Right ventricle myocardium superior (tissue), 1 donor: ENCODE measurements at regions of chr3 and their contacts with region 1.

Region 1: DNA sequence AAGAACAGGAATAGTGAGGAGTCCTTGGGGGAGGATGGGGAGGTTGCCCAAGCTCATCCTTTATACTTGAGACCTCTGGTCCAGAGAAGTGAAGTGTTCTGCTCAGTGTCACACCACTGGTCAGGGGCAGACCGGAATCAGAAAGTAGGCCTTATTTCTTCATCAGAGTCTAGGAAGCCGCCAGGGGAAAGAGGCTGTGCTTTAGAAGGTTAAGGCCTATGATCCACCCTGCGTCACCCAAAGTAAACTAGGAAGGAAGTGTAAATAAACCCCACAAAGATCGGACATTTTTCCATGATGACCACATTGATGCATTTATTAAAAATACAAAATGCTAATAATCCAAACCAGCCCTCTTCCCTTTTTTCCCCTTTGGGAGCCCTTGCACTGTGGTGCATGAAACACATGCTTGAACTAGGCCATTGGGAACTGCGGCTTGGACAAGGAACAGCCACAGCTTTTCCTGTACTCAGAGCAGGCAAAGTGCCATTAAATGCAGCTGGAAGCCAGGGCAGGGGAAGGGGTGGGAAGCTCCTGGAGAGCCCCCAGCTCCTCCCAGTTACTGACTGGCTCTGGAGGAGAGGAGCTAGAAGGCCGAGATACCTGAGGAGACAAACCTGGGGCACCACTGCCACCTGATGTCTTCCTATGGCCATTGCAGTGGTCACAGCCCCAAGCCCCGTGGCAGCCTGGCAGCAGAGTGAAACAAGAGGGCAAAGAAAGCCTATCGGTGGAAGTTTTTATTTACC is 37.0 kb downstream of the CDC25A start:
- DNase-seq: peak; percentile 86
- ATAC-seq: peak; percentile 99

Region 2: DNA sequence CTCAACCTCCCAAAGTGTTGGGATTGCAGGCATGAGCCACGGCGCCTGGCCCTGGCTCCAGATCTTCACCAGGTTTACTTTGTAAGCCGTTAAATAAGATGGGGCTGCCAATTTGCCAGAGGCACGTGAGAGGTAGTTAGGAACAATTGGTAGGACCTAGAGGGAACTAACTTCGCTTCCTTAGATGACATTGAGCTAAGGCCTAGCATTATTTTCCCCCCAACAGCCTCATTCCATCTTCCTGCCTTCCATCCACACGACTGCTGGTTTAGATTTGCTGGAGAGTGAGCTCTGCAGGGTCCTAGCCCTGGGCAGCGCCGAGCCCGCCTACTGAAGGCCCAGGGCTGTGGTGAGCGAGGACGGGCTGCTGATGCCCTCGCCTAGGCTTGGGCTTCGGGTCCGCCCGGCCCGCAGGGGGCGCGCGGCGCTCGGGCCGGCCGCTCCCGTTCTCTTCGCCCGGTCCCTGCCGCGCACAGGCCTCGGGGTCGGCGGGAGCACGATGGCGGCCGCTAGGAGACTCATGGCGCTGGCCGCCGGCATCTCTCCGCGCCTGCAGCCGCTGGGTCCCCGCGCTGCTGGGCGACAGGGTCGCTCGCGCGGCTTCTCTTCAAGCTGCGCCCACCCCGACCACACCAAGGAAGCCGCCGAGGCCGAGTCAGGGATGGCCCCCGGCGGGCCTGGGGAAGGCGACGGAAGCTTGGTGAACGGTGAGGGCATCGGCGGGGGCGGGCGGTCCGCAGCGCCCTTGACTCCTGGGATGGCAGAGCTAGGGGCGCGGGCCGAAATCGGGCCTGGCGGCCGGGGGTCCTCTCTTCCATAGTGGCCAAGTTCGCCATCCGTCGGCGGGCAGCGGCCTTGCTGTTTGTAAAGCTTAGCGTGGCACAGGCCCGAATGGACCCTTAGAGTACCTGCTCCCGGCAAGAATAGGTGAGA is 326.4 kb before region 1 on chr3:
- intact Hi-C with region 1: loop called (anchors 5 kb)
- DNase-seq: peak; percentile 86
- ATAC-seq: peak; percentile 100

Region 3: GRCh38 chr3:47996440-47996839 is 154.8 kb before region 1 on chr3:
- intact Hi-C with region 1: loop called (anchors 5 kb)
- DNase-seq: no peak
- ATAC-seq: no peak

Region 4: GRCh38 chr3:48088749-48089466 is 62.3 kb before region 1 on chr3:
- intact Hi-C with region 1: loop called (anchors 2 kb)
- DNase-seq: peak; percentile 99
- ATAC-seq: peak; percentile 95